Caco-2 (cell line): ENCODE measurements at regions of chr6 and their contacts with region 1.

Region 1: GRCh38 chr6:104613416-104614001 is 246.2 kb downstream of the HACE1 start:
- DNase-seq: peak; percentile 30 to 39
- H3K4me3 ChIP-seq: no peak overlapping the region
- H3K4me3 Mint-ChIP-seq: peak overlapping the region; percentile 59
- H3K27ac Mint-ChIP-seq: peak overlapping the region; percentile 61
- H3K4me1 ChIP-seq: peaks cover 13% of the 10 kb centered on the region
- H3K4me1 Mint-ChIP-seq: peaks cover 25% of the 10 kb centered on the region
- H3K27me3 ChIP-seq: no peaks in the 10 kb centered on the region
- H3K27me3 Mint-ChIP-seq: no peaks in the 10 kb centered on the region
- CTCF ChIP-seq: no peak

Region 2: DNA sequence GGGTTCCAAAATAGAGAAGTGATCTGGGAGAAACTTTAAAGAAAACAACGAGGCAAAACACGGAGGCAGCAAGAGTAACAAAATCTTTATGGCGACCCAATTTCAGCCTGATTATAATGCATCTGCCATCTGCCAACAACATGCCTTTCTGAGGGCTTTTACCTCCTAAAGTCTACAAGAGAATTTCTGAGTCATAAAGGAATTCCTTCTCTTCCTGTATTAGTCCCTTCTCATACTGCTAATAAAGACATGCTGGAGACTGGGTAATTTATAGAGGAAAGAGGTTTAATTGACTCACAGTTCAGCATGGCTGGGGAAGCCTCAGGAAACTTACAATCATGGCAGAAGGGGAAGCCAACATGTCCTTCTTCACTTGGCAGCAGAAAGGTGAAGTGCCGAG is 19.6 kb after region 1 on chr6:
- CTCF ChIA-PET with region 1: no interaction called
- POLR2A ChIA-PET with region 1: no interaction called
- intact Hi-C with region 1: loop called (anchors 2 kb)
- DNase-seq: no peak
- H3K4me3 ChIP-seq: no peak overlapping the region
- H3K4me3 Mint-ChIP-seq: no peak overlapping the region
- H3K27ac Mint-ChIP-seq: no peak overlapping the region
- H3K4me1 ChIP-seq: peaks cover 6% of the 10 kb centered on the region; the same call in 1 of the 2 replicates
- H3K4me1 Mint-ChIP-seq: peaks cover 9% of the 10 kb centered on the region
- H3K27me3 ChIP-seq: no peaks in the 10 kb centered on the region
- H3K27me3 Mint-ChIP-seq: no peaks in the 10 kb centered on the region
- CTCF ChIP-seq: no peak